Common myeloid progenitor, CD34-positive (primary cell): ENCODE measurements at regions of chr2 and their contacts with region 1.

Region 1: DNA sequence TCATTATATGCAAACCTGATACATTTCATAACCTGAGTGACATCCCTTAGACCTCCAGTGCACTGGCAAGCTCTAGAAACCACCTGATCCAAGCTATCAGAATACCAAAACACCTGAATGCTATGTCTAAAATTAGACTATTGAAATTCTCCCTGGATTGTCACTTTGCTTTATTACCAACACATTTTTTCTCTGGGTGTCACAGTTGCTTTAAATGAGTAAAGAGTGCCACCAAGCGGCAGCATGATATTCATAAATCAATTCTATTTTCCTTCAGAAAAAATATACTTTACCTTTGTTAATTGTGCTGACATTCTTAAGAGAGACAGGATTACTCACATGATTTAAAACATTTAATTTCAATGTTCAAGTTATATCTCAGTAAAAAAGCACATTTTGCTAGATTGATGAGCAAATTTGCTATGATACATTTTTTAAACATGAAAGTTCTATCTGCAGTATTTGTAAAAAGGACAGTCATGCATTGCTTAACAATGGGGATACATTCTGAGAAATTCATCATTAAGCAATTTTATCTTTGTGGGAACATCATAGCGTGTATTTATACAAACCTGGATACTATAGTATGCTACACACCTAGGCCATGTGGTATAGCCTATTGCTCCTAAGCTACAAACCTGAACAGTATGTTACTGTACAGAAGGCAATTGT is 338.4 kb upstream of the SLC39A10 start:
- DNase-seq: peak; percentile 54 to 79 (median 74)
- H3K4me3 ChIP-seq: no peak overlapping the region
- H3K27ac ChIP-seq: no peak overlapping the region
- H3K4me1 ChIP-seq: peaks cover 6 to 36% (median 18%) of the 10 kb centered on the region in 4 experiments
- H3K27me3 ChIP-seq: no peaks in the 10 kb centered on the region

Region 2: GRCh38 chr2:194166818-194167217 is 1151.8 kb before region 1 on chr2:
- CTCF ChIA-PET with region 1: interaction called, 10 read pairs
- POLR2A ChIA-PET with region 1: no interaction called
- DNase-seq: peak; percentile 14 to 45 (median 31)
- H3K4me3 ChIP-seq: no peak overlapping the region
- H3K27ac ChIP-seq: no peak overlapping the region
- H3K4me1 ChIP-seq: no peaks in the 10 kb centered on the region
- H3K27me3 ChIP-seq: no peaks in the 10 kb centered on the region

Region 3: DNA sequence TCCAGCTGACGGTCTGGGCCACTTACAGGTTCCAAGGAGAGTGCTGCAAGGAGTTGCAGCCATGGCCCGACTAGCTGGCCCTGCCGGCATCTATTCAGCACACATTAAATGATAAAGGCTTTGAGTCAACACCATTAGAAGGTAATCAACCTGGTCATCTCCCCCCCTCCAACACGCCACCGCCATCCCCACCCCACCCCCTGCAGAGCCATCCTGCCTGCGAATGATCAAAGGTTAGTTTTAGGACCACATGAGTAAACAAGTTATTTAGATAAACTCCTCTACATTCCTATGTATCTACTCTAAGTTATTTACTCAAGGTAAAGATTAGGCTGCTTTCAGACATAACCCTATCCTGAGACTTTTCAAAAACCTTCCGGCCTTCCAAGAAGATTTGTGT is 10.8 kb before region 1 on chr2:
- CTCF ChIA-PET with region 1: interaction called, 18 read pairs
- POLR2A ChIA-PET with region 1: no interaction called
- DNase-seq: no peak
- H3K4me3 ChIP-seq: no peak overlapping the region
- H3K27ac ChIP-seq: no peak overlapping the region
- H3K4me1 ChIP-seq: no peaks in the 10 kb centered on the region
- H3K27me3 ChIP-seq: no peaks in the 10 kb centered on the region

Region 4: DNA sequence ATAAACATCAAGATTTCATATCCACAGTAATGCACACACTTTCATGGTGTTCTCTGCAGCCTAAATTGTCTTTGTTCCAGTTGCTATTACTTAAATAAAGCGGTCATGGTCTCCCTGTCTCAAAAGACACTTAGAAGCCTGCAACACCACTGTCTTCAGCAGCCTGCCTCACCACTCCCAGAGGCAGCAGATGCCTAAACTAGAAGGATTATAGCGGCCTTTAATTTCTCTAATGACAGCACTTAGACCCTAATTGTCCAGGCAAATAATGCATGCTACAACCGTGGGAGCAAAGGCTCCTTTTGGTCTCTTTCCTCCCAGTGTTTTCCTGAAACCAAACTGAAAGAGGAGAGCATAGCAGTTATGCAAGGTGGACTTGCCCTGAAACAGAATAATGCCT is 89.6 kb after region 1 on chr2:
- CTCF ChIA-PET with region 1: no interaction called
- POLR2A ChIA-PET with region 1: no interaction called
- DNase-seq: no peak
- H3K4me3 ChIP-seq: no peak overlapping the region
- H3K27ac ChIP-seq: no peak overlapping the region
- H3K4me1 ChIP-seq: no peaks in the 10 kb centered on the region
- H3K27me3 ChIP-seq: no peaks in the 10 kb centered on the region

Region 5: DNA sequence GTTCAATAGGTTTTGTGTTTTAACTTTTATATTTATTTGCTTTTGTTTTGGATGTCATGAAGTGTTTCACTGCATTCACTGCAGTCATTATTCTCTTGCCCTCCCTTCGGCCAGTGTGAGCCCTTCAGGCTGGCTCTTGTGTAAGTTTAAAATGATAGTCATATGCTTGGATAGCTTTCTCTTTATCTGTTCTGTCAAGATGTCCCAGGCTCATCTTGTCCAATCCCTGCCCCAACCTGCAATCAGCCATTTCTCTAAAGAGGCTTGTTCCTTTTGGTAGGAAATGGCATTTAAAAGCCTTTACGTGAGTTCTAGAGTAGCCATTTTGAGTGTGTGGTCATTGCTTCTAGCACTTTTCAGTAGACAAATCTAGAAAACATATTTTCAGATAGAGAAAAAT is 100.5 kb after region 1 on chr2:
- CTCF ChIA-PET with region 1: no interaction called
- POLR2A ChIA-PET with region 1: no interaction called
- DNase-seq: no peak
- H3K4me3 ChIP-seq: no peak overlapping the region
- H3K27ac ChIP-seq: no peak overlapping the region
- H3K4me1 ChIP-seq: no peaks in the 10 kb centered on the region
- H3K27me3 ChIP-seq: no peaks in the 10 kb centered on the region